GM10248 (cell line): ENCODE measurements at regions of chr12 and their contacts with region 1.

Region 1: DNA sequence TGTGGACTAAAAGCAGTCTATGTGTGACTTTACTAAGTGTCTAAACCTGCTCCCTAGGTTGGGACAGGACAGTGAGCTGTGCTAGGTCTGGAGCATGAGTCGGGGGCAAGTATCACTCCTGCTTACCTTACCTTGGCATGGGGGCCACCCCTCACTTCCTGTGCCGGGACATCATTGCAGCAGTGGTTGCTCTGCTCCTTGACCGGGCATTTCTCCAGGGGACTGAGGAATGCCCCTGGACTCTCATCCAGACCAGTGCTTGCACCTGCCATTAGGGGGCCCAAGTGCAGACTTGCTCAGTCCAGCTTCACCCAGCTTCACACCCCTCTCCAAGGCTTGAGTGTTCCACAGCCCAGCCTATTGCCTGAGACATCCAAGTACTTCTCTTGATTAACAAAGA is 84.7 kb upstream of the NELL2 start:
- DNase-seq: no peak
- CTCF ChIP-seq: no peak

Region 2: GRCh38 chr12:44921736-44922135 is 39.1 kb before region 1 on chr12:
- CTCF ChIA-PET with region 1: no interaction called
- POLR2A ChIA-PET with region 1: no interaction called
- DNase-seq: no peak
- CTCF ChIP-seq: no peak

Region 3: GRCh38 chr12:44942714-44943113 is 18.1 kb before region 1 on chr12:
- CTCF ChIA-PET with region 1: interaction called, 42 read pairs
- POLR2A ChIA-PET with region 1: no interaction called
- DNase-seq: no peak
- CTCF ChIP-seq: no peak

Region 4: GRCh38 chr12:45205165-45205825 is 244.4 kb after region 1 on chr12:
- CTCF ChIA-PET with region 1: no interaction called
- POLR2A ChIA-PET with region 1: no interaction called
- DNase-seq: no peak
- CTCF ChIP-seq: no peak